Naive thymus-derived CD4-positive, alpha-beta T cell (primary cell): ENCODE measurements at regions of chr9 and their contacts with region 1.

Region 1: DNA sequence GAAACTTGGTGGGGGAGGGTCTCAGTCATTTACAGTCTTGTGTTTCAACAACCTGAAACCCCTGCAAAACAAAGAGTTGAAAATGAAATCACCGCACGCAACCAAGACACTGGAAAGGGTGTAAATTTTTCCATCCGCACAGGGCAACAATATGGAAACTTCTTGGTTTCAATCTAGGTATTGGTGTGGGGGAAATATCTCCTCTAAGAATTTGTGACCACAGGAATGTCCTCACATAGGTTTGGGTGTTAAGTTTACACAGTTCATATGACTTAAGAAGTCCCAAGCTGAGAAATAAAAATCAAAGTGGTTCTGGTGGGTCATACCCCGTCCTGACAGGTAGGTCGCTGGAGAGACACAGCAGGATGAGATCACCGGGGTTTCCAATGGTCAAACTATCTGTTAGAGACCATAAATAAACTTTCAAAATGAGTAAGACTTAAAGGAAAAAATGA is 51.9 kb upstream of the PIP5K1B start:
- DNase-seq: peak in 1 of 9 donors; percentile 46
- ATAC-seq: no peak
- H3K4me3 ChIP-seq: no peak overlapping the region
- H3K4me3 Mint-ChIP-seq: peak overlapping the region in 1 of 10 donors; percentile 20
- H3K27ac ChIP-seq: no peak overlapping the region
- H3K27ac Mint-ChIP-seq: peak overlapping the region in 1 of 9 donors; percentile 67
- H3K4me1 ChIP-seq: no peaks in the 10 kb centered on the region
- H3K4me1 Mint-ChIP-seq: peaks cover 0 to 22% (median 0%) of the 10 kb centered on the region in 7 donors
- H3K27me3 ChIP-seq: peaks cover 0 to 6% of the 10 kb centered on the region in 2 donors
- H3K27me3 Mint-ChIP-seq: peaks cover 0 to 47% (median 30%) of the 10 kb centered on the region in 5 donors

Region 2: GRCh38 chr9:68640421-68641089 is 12.6 kb before region 1 on chr9:
- CTCF ChIA-PET with region 1: no interaction called
- POLR2A ChIA-PET with region 1: no interaction called
- intact Hi-C with region 1: loop called in 1 of 2 experiments (anchors 1 kb)
- DNase-seq: no peak
- ATAC-seq: peak; percentile 37
- H3K4me3 ChIP-seq: no peak overlapping the region
- H3K4me3 Mint-ChIP-seq: no peak overlapping the region
- H3K27ac ChIP-seq: no peak overlapping the region
- H3K27ac Mint-ChIP-seq: no peak overlapping the region
- H3K4me1 ChIP-seq: no peaks in the 10 kb centered on the region
- H3K4me1 Mint-ChIP-seq: peaks cover 0 to 3% (median 0%) of the 10 kb centered on the region in 7 donors
- H3K27me3 ChIP-seq: no peaks in the 10 kb centered on the region
- H3K27me3 Mint-ChIP-seq: peaks cover 0 to 6% (median 0%) of the 10 kb centered on the region in 5 donors